Activated CD4-positive, alpha-beta T cell treated with anti-CD3 and anti-CD28 coated beads, Interleukin-2, amount 10 ng/mL, durations not matched to agents 24 days and 14 days (primary cell): ENCODE measurements at regions of chr4 and their contacts with region 1.

Region 1: GRCh38 chr4:118270492-118270891 is 82.3 kb downstream of the PRSS12 start:
- DNase-seq: peak; percentile 65
- H3K4me3 Mint-ChIP-seq: no peak overlapping the region
- H3K27ac Mint-ChIP-seq: no peak overlapping the region
- H3K4me1 Mint-ChIP-seq: no peaks in the 10 kb centered on the region
- H3K27me3 Mint-ChIP-seq: peaks cover 5% of the 10 kb centered on the region

Region 2: GRCh38 chr4:116358588-116359222 is 1911.8 kb before region 1 on chr4:
- intact Hi-C with region 1: loop called (anchors 2 kb)
- DNase-seq: peak; percentile 87
- H3K4me3 Mint-ChIP-seq: no peak overlapping the region
- H3K27ac Mint-ChIP-seq: no peak overlapping the region
- H3K4me1 Mint-ChIP-seq: no peaks in the 10 kb centered on the region
- H3K27me3 Mint-ChIP-seq: no peaks in the 10 kb centered on the region

Region 3: GRCh38 chr4:116982656-116983055 is 1287.8 kb before region 1 on chr4:
- intact Hi-C with region 1: no loop called
- DNase-seq: no peak
- H3K4me3 Mint-ChIP-seq: no peak overlapping the region
- H3K27ac Mint-ChIP-seq: no peak overlapping the region
- H3K4me1 Mint-ChIP-seq: no peaks in the 10 kb centered on the region
- H3K27me3 Mint-ChIP-seq: no peaks in the 10 kb centered on the region

Region 4: GRCh38 chr4:117447925-117448324 is 822.6 kb before region 1 on chr4:
- intact Hi-C with region 1: loop called (anchors 5 kb)
- DNase-seq: peak; percentile 68
- H3K4me3 Mint-ChIP-seq: no peak overlapping the region
- H3K27ac Mint-ChIP-seq: no peak overlapping the region
- H3K4me1 Mint-ChIP-seq: no peaks in the 10 kb centered on the region
- H3K27me3 Mint-ChIP-seq: no peaks in the 10 kb centered on the region

Region 5: DNA sequence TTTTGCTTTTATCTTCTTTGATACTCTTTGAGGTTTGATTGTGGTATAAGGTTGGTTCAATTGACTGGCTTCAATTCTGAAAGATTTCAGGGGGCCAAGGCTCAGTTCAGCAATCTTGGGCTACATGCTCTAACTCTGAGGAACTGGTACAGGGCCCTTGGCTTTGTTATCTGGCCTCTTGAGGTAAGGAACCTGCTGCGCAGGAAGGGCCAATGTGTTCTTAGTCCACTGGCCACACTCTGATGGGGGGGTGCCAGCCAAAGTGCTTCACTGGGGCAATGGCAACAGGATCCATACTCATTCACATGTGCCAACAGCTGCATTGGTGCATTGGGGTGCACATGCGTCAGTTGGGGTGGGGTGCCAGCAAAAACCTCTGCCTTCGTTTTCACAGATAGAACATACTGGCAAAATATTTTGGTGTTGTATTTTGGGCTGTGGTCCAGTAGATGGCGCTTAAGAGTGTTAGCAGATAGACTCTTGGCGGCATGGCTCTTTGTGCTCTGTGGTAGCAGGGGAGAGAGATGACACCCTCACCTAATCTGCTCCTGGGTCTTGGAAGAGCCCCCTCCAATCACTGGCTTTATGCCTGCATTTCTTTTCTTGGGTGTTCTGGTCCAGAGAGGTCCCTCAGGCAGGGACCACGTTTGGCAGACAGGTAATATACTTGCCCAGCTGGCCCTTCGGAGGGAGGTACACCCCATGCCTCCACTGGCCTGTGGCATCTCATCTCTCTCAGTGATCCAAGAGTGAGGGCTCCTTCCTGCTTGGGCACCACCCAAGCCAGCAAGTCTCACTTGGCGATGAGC is 193.3 kb before region 1 on chr4:
- intact Hi-C with region 1: loop called (anchors 2 kb)
- DNase-seq: peak; percentile 75
- H3K4me3 Mint-ChIP-seq: no peak overlapping the region
- H3K27ac Mint-ChIP-seq: no peak overlapping the region
- H3K4me1 Mint-ChIP-seq: peaks cover 5% of the 10 kb centered on the region
- H3K27me3 Mint-ChIP-seq: peaks cover 5% of the 10 kb centered on the region

Region 6: DNA sequence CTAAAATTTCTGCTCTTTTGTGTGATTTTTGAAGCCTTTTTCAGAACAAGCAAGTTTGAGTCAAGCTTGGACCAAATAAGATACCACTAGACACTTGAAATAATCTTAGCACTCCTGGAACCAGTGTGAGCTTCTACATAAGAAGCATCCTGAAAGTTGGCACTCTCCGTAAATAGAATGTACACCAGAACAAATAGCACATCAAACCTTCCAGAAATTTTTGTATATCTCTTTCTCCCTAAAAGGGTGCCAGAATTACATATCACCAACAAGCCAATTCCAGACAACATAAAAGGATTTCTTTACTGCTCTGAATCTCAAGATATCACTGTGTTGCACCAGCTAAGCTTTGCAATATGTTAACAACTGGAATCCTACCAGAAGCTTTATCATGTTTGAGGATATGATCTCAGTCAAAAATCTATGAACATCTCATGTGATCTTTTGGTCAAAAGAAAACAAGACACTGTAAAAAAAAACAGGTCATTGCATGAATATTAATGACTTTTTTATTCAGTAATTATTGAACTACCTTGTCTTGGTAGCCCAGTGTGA is 34.8 kb before region 1 on chr4:
- intact Hi-C with region 1: no loop called
- DNase-seq: no peak
- H3K4me3 Mint-ChIP-seq: no peak overlapping the region
- H3K27ac Mint-ChIP-seq: no peak overlapping the region
- H3K4me1 Mint-ChIP-seq: no peaks in the 10 kb centered on the region
- H3K27me3 Mint-ChIP-seq: peaks cover 10% of the 10 kb centered on the region